ENCODE measurements at regions of chr9 and their contacts with region 1.

Region 1: DNA sequence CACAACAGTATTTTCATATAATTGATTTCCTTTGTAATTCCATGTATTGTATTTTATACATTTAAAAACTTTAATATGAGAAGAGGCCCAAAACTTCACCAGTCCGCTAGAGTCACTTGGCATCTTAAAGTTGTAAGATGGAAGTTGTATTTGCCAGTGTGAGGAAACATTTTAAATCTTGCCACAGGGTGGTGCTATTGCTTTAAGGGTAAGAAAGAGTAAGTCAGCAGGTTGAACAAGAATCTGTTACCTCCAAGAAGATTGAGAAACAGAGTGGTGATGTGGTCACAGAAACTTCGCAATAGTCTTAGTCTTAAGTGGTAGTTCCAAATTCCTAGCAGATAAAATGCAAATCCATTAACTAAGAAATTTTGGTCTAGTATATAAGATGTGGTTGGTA is 39.8 kb upstream of the RANBP6 start:
- DNase-seq: no peak
- H3K4me3 ChIP-seq: no peak overlapping the region
- H3K27ac ChIP-seq: no peak overlapping the region
- H3K4me1 ChIP-seq: no peaks in the 10 kb centered on the region
- H3K27me3 ChIP-seq: no peaks in the 10 kb centered on the region
- CTCF ChIP-seq: peak; percentile 23 to 69 (median 31)
- POLR2A ChIP-seq: no peak

Region 2: GRCh38 chr9:5582835-5583195 is 472.4 kb before region 1 on chr9:
- intact Hi-C with region 1: no loop called
- DNase-seq: no peak
- H3K4me3 ChIP-seq: no peak overlapping the region
- H3K27ac ChIP-seq: peak overlapping the region; percentile 60
- H3K4me1 ChIP-seq: peaks cover 5% of the 10 kb centered on the region
- H3K27me3 ChIP-seq: no peaks in the 10 kb centered on the region
- CTCF ChIP-seq: no peak
- POLR2A ChIP-seq: no peak

Region 3: GRCh38 chr9:5886114-5886939 is 168.9 kb before region 1 on chr9:
- intact Hi-C with region 1: loop called (anchors 10 kb)
- DNase-seq: peak in 1 of 2 donors; percentile 58
- H3K4me3 ChIP-seq: no peak overlapping the region
- H3K27ac ChIP-seq: no peak overlapping the region
- H3K4me1 ChIP-seq: no peaks in the 10 kb centered on the region
- H3K27me3 ChIP-seq: no peaks in the 10 kb centered on the region
- CTCF ChIP-seq: peak; percentile 69 to 83 (median 82)
- POLR2A ChIP-seq: no peak

Region 4: GRCh38 chr9:6305954-6306563 is 250.8 kb after region 1 on chr9:
- intact Hi-C with region 1: loop called (anchors 10 kb)
- DNase-seq: no peak
- H3K4me3 ChIP-seq: no peak overlapping the region
- H3K27ac ChIP-seq: no peak overlapping the region
- H3K4me1 ChIP-seq: no peaks in the 10 kb centered on the region
- H3K27me3 ChIP-seq: no peaks in the 10 kb centered on the region
- CTCF ChIP-seq: peak in 2 of 3 experiments; percentile 55 to 70
- POLR2A ChIP-seq: no peak

Measured in vagina (tissue), 2 donors.